HepG2 (cell line): ENCODE measurements at regions of chr6 and their contacts with region 1.

Region 1: GRCh38 chr6:119349323-119350042 is at the start of gene MAN1A1:
- DNase-seq: peak; percentile 87
- ATAC-seq: peak; percentile 89
- H3K4me3 ChIP-seq: peak within 1 kb of the TSS; percentile 89 to 99 (median 99)
- H3K27ac ChIP-seq: peak within 1 kb of the TSS; percentile 100
- H3K4me1 ChIP-seq: peaks cover 24% of the 10 kb centered on the region
- H3K27me3 ChIP-seq: no peaks in the 10 kb centered on the region; a peak in 1 of 5 replicates
- CTCF ChIP-seq: peak; percentile 51
- EP300 ChIP-seq: peak; percentile 30 to 52; a peak in 2 of 4 replicates
- POLR2A ChIP-seq: peak; percentile 98 to 100
- RAD21 ChIP-seq: peak; percentile 28; the same call in 1 of the 2 replicates
- total RNA-seq, gene MAN1A1: 98.7 and 156 TPM in 2 replicates

Region 2: DNA sequence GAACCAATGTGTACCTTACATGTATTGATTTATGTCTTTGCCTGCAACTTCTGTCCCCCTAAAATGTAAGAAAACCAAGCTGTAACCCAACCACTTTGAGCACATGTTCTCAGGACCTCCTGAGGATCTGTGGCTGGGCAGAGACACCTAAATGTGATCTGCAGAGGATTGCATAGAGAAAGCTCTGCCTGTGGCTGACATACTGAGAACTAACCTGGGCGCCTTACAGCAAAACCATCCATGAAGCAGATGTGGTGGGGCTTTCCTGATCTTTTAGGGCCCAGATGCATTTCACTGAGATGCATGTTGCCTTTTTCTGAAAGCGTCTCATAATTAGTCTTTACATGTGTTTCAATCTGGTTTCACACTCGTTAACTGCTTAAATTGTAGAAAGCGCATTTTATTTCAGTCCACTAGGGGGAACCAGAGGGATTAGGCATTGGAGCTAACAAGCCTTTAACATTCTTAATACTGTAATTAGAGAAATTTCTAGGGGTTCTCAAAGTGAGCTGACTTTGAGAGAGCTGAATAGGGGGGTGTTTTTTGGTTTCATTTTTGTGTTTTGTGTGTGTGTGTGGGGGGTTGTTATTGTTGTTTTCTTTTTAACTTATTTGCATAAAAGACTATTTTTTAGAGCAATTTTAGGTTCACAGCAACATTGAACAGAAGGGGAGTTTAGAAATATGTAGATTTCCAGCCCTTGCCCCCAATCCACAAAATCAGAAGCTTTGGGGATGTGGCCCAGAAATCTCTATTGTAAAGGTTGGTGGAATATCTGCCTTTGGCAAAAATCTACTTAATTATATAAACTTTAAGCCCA is 220.1 kb before region 1 on chr6:
- CTCF ChIA-PET with region 1: no interaction called
- POLR2A ChIA-PET with region 1: interaction called, 13 read pairs
- in situ Hi-C with region 1: no loop called
- intact Hi-C with region 1: loop called (anchors 5 kb)
- DNase-seq: peak; percentile 76
- ATAC-seq: peak; percentile 80
- H3K4me3 ChIP-seq: peak overlapping the region in 1 of 3 experiments; percentile 6; a peak in 1 of 6 replicates
- H3K27ac ChIP-seq: peak overlapping the region; percentile 35
- H3K4me1 ChIP-seq: peaks cover 43% of the 10 kb centered on the region
- H3K27me3 ChIP-seq: no peaks in the 10 kb centered on the region
- CTCF ChIP-seq: peak; percentile 82
- EP300 ChIP-seq: no peak
- POLR2A ChIP-seq: no peak
- RAD21 ChIP-seq: peak; percentile 62

Region 3: DNA sequence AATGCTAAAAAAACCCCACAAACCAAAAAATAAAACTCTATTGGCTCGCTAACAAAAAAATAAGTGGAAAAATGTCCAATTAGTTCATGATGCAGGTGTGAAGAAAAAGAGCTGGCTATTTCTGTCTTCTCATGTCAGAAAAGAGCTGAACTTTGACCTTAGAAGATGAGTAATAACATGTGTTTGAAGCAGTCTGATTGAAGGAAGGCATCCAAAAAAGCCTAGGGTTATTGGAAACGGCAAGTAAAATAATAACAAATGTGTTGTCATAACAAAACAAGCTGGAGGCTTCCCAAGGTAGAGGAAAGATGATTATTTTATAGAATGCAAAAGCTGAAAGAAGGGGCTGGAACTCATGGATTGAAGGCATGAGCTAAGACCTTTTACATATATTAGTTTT is 176.7 kb before region 1 on chr6:
- CTCF ChIA-PET with region 1: no interaction called
- POLR2A ChIA-PET with region 1: interaction called, 13 read pairs
- in situ Hi-C with region 1: no loop called
- intact Hi-C with region 1: loop called (anchors 2 kb)
- DNase-seq: peak; percentile 67
- ATAC-seq: no peak
- H3K4me3 ChIP-seq: no peak overlapping the region
- H3K27ac ChIP-seq: peak overlapping the region; percentile 74
- H3K4me1 ChIP-seq: peaks cover 83% of the 10 kb centered on the region
- H3K27me3 ChIP-seq: no peaks in the 10 kb centered on the region
- CTCF ChIP-seq: no peak
- EP300 ChIP-seq: peak in 1 of 2 experiments; percentile 39; a peak in 1 of 4 replicates
- POLR2A ChIP-seq: no peak
- RAD21 ChIP-seq: no peak

Region 4: DNA sequence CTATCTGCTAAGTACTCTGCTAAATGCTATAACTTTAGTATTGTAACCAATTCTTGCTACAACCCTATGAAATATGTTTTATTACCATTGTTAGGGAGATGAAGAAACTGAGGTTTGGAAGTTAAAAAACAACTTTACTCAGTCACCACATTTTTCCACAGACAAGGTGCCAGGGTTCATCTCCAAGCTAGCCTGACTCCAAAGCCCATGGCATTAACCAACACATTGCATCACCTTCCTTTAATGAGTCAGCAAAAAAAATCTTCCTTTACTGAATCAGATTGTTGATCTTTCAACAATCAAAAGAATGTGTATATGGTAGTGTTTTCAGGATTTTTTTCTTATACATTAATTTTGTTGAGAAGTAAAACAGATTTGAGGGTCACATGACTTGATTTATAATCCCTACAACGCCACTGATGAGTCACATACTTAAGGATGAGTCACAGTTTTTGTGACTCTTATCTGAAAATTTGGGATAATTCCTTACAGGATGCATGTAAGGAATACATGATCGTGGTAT is 41.4 kb before region 1 on chr6:
- CTCF ChIA-PET with region 1: interaction called, 3 read pairs
- POLR2A ChIA-PET with region 1: interaction called, 8 read pairs
- in situ Hi-C with region 1: no loop called
- intact Hi-C with region 1: loop called (anchors 2 kb)
- DNase-seq: peak; percentile 83
- ATAC-seq: peak; percentile 42
- H3K4me3 ChIP-seq: no peak overlapping the region; a peak in 1 of 6 replicates
- H3K27ac ChIP-seq: peak overlapping the region; percentile 52
- H3K4me1 ChIP-seq: peaks cover 58% of the 10 kb centered on the region
- H3K27me3 ChIP-seq: no peaks in the 10 kb centered on the region
- CTCF ChIP-seq: no peak
- EP300 ChIP-seq: peak in 1 of 2 experiments; percentile 81; a peak in 3 of 4 replicates
- POLR2A ChIP-seq: no peak
- RAD21 ChIP-seq: no peak

Region 5: GRCh38 chr6:119333707-119334295 is 15.7 kb before region 1 on chr6:
- CTCF ChIA-PET with region 1: no interaction called
- POLR2A ChIA-PET with region 1: interaction called, 14 read pairs
- in situ Hi-C with region 1: no loop called
- intact Hi-C with region 1: loop called (anchors 2 kb)
- DNase-seq: no peak
- ATAC-seq: peak; percentile 53
- H3K4me3 ChIP-seq: no peak overlapping the region
- H3K27ac ChIP-seq: no peak overlapping the region
- H3K4me1 ChIP-seq: peaks cover 81% of the 10 kb centered on the region
- H3K27me3 ChIP-seq: no peaks in the 10 kb centered on the region
- CTCF ChIP-seq: peak; percentile 35; the same call in 1 of the 2 replicates
- EP300 ChIP-seq: no peak
- POLR2A ChIP-seq: no peak
- RAD21 ChIP-seq: no peak

Region 6: GRCh38 chr6:119736296-119737021 is 387.0 kb after region 1 on chr6:
- CTCF ChIA-PET with region 1: no interaction called
- POLR2A ChIA-PET with region 1: no interaction called
- in situ Hi-C with region 1: loop called (anchors 10 kb)
- intact Hi-C with region 1: no loop called
- DNase-seq: no peak
- ATAC-seq: no peak
- H3K4me3 ChIP-seq: no peak overlapping the region
- H3K27ac ChIP-seq: no peak overlapping the region
- H3K4me1 ChIP-seq: no peaks in the 10 kb centered on the region
- H3K27me3 ChIP-seq: peaks cover 0 to 6% of the 10 kb centered on the region in 2 experiments; a peak in 1 of 5 replicates
- CTCF ChIP-seq: no peak
- EP300 ChIP-seq: no peak
- POLR2A ChIP-seq: no peak
- RAD21 ChIP-seq: no peak

Region 7: GRCh38 chr6:119978274-119978889 is 628.9 kb after region 1 on chr6:
- CTCF ChIA-PET with region 1: interaction called, 4 read pairs
- POLR2A ChIA-PET with region 1: no interaction called
- in situ Hi-C with region 1: no loop called
- intact Hi-C with region 1: loop called (anchors 5 kb)
- DNase-seq: peak; percentile 15
- ATAC-seq: peak; percentile 83
- H3K4me3 ChIP-seq: no peak overlapping the region
- H3K27ac ChIP-seq: no peak overlapping the region
- H3K4me1 ChIP-seq: no peaks in the 10 kb centered on the region
- H3K27me3 ChIP-seq: no peaks in the 10 kb centered on the region
- CTCF ChIP-seq: peak; percentile 48
- EP300 ChIP-seq: no peak
- POLR2A ChIP-seq: no peak
- RAD21 ChIP-seq: no peak